ENCODE measurements at regions of chr17 and their contacts with region 1.

Region 1: GRCh38 chr17:59829217-59830006 is 63.3 kb downstream of the TUBD1 start:
- H3K4me3 ChIP-seq: peak overlapping the region; percentile 4; the same call in 1 of the 2 replicates
- H3K27ac ChIP-seq: peak overlapping the region; percentile 95
- H3K4me1 ChIP-seq: peaks cover 39% of the 10 kb centered on the region
- CTCF ChIP-seq: no peak

Region 2: DNA sequence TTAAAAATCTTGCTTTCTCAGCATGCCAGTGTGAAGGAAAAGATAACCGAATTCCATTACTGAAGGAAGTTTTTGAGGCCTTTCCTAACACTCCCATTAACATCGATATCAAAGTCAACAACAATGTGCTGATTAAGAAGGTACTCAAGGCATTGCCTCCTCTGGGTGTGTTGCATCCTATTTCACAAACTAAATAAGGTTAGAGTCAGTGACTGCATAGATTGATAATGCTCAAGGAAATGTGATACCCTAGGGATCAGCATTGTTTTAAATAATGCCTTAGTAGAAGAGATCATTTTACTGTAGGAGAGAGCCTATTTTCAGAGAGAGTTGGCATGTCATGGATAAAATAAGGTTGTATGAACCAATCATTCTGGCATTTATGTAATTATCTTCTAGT is 572.3 kb before region 1 on chr17:
- CTCF ChIA-PET with region 1: no interaction called
- POLR2A ChIA-PET with region 1: no interaction called
- H3K4me3 ChIP-seq: no peak overlapping the region
- H3K27ac ChIP-seq: no peak overlapping the region
- H3K4me1 ChIP-seq: peaks cover 9% of the 10 kb centered on the region
- CTCF ChIP-seq: no peak

Region 3: DNA sequence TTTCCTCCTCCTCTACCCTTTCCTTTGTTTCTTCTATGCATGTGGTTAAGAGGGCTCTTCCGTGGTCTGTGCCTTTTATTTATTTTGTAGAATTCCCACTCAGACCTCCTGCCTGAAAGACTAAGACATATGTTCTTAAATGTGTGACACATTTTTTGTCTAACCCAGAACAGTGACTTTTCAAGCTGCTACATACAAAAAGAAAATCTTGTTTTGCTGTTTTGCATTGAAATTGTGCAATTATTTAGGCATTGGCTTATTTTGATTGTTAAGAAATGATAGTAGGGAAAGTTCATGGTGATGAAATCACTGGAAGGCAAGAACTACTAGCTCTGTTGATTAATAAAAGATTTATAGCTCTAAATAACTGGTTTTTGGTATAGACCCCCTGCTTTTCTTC is 13.4 kb before region 1 on chr17:
- CTCF ChIA-PET with region 1: interaction called, 10 read pairs
- POLR2A ChIA-PET with region 1: interaction called, 5 read pairs
- H3K4me3 ChIP-seq: no peak overlapping the region
- H3K27ac ChIP-seq: no peak overlapping the region
- H3K4me1 ChIP-seq: no peaks in the 10 kb centered on the region
- CTCF ChIP-seq: no peak